Endothelial cell of umbilical vein (primary cell): ENCODE measurements at regions of chr12 and their contacts with region 1.

Region 1: DNA sequence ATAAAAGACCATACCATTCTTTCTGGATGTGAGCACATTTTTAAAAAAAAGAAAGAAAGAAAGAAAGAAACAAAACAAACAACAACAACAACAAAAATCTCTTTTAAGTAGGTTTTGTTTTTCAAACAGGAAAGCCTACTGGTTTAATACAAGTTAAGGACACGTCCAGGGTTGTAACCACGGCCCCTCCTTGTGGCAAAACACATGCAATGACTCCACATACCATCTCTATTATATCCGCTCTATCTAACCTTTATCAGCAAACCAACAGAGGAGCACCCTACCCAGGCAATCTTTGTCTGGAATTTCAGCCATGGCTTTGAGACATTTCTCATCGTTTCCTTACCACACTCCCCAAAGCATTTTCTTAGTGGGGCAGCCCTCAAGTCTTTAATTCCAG is 360.5 kb upstream of the TMPO start:
- DNase-seq: peak; percentile 57
- H3K4me3 ChIP-seq: no peak overlapping the region
- H3K27ac ChIP-seq: no peak overlapping the region
- H3K4me1 ChIP-seq: no peaks in the 10 kb centered on the region
- H3K27me3 ChIP-seq: peaks cover 0 to 7% of the 10 kb centered on the region in 2 experiments
- CTCF ChIP-seq: peak; percentile 34 to 65
- POLR2A ChIP-seq: no peak

Region 2: DNA sequence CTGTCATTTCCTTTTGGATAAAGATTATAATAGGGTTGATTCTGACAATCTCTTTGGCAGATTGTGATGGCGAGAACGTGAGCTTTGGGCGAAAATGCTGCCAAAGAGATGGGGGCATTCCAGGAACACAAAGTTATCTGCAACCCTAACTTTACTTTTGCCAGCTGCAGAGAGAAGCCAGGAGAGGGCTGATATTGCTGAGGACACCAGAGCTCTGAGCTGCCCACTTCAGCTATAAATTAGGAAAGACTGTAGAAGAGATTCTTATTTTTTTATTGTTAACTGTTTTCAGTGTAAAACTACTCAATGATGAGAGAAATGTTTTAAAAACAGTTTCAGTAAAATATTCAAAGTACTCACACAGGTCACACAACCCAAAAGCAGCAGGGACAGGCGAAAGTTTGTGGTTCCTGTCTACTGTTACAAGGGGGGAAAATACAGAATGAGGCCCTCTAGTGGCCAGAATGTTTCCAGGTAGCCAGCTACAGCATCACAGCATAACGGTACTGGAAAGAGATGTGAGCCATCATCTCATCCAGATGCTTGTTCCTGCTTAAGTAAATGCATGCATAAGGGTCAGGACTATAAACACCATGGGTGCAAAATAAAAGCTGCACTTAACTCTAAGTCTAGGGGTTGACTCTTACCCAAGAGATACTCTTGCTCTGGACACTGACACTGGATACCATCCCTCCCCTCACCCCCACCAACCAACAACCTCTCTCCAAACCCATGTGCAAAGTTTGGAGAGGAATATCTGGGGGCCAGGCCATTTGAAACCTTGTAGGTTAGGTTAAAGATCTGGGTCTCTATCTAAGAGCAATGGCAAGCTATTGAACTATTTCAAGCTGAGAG is 193.9 kb before region 1 on chr12:
- CTCF ChIA-PET with region 1: interaction called, 9 read pairs
- POLR2A ChIA-PET with region 1: no interaction called
- dilution Hi-C with region 1: no loop called
- intact Hi-C with region 1: loop called (anchors 2 kb)
- DNase-seq: peak; percentile 20
- H3K4me3 ChIP-seq: no peak overlapping the region
- H3K27ac ChIP-seq: no peak overlapping the region
- H3K4me1 ChIP-seq: no peaks in the 10 kb centered on the region
- H3K27me3 ChIP-seq: no peaks in the 10 kb centered on the region
- CTCF ChIP-seq: peak; percentile 63 to 73
- POLR2A ChIP-seq: no peak

Region 3: GRCh38 chr12:98126637-98127335 is 28.1 kb before region 1 on chr12:
- CTCF ChIA-PET with region 1: no interaction called
- POLR2A ChIA-PET with region 1: no interaction called
- dilution Hi-C with region 1: no loop called
- intact Hi-C with region 1: loop called (anchors 1 kb)
- DNase-seq: peak; percentile 82
- H3K4me3 ChIP-seq: peak overlapping the region in 1 of 3 experiments; percentile 30
- H3K27ac ChIP-seq: peak overlapping the region; percentile 95
- H3K4me1 ChIP-seq: peaks cover 22% of the 10 kb centered on the region
- H3K27me3 ChIP-seq: no peaks in the 10 kb centered on the region
- CTCF ChIP-seq: no peak
- POLR2A ChIP-seq: no peak